ENCODE measurements at regions of chr6 and their contacts with region 1.

Region 1: DNA sequence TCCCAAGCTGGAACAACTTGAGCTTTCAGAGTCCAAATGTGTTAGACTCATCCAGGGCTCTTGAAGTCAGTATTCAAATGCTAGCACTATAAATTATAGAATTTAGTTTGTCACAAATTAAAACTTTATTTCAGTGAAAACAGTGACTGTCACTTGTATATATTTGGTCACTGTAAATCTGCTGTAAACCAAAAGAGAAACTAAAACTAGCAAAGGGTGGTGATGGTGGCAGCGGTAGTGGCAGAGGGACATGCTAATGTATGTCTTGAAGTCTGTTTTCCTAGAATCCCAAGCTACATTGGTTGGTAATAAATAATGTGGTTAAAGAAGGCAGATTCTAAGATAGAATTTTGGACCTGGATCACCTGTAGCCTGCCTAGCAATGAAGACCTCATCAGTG is 140.4 kb upstream of the CENPW start:
- DNase-seq: no peak
- H3K4me3 ChIP-seq: no peak overlapping the region
- H3K4me3 Mint-ChIP-seq: no peak overlapping the region
- H3K27ac Mint-ChIP-seq: no peak overlapping the region
- H3K4me1 ChIP-seq: peaks cover 7% of the 10 kb centered on the region
- H3K4me1 Mint-ChIP-seq: peaks cover 18% of the 10 kb centered on the region
- H3K27me3 ChIP-seq: no peaks in the 10 kb centered on the region
- H3K27me3 Mint-ChIP-seq: no peaks in the 10 kb centered on the region
- CTCF ChIP-seq: no peak

Region 2: DNA sequence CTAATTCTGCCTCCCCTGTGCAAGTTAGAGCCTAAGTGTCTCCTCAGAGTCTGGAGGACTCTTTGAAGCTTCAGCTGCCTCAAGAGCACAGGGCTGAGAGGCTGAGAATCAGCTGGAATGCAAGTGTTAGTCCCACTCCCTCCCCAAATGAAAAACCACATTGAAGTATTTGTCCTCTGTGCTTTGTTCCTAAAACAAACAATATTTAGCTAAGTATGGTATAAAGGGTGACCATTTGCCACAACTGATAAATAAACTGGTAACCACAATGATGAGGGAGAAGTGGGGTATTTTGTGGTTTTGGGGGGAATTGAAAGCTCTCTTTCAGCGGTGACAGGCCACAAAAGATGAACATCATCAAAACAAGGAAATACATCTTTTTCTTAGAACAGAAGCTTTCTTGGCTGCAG is 806.0 kb before region 1 on chr6:
- CTCF ChIA-PET with region 1: no interaction called
- POLR2A ChIA-PET with region 1: no interaction called
- intact Hi-C with region 1: no loop called
- DNase-seq: no peak
- H3K4me3 ChIP-seq: no peak overlapping the region
- H3K4me3 Mint-ChIP-seq: no peak overlapping the region
- H3K27ac Mint-ChIP-seq: no peak overlapping the region
- H3K4me1 ChIP-seq: no peaks in the 10 kb centered on the region
- H3K4me1 Mint-ChIP-seq: no peaks in the 10 kb centered on the region
- H3K27me3 ChIP-seq: no peaks in the 10 kb centered on the region
- H3K27me3 Mint-ChIP-seq: peaks cover 15% of the 10 kb centered on the region
- CTCF ChIP-seq: no peak

Region 3: GRCh38 chr6:126077810-126078776 is 121.4 kb before region 1 on chr6:
- CTCF ChIA-PET with region 1: no interaction called
- POLR2A ChIA-PET with region 1: no interaction called
- intact Hi-C with region 1: no loop called
- DNase-seq: no peak
- H3K4me3 ChIP-seq: no peak overlapping the region
- H3K4me3 Mint-ChIP-seq: no peak overlapping the region
- H3K27ac Mint-ChIP-seq: no peak overlapping the region
- H3K4me1 ChIP-seq: peaks cover 26% of the 10 kb centered on the region
- H3K4me1 Mint-ChIP-seq: peaks cover 6% of the 10 kb centered on the region
- H3K27me3 ChIP-seq: no peaks in the 10 kb centered on the region
- H3K27me3 Mint-ChIP-seq: no peaks in the 10 kb centered on the region
- CTCF ChIP-seq: no peak

Region 4: DNA sequence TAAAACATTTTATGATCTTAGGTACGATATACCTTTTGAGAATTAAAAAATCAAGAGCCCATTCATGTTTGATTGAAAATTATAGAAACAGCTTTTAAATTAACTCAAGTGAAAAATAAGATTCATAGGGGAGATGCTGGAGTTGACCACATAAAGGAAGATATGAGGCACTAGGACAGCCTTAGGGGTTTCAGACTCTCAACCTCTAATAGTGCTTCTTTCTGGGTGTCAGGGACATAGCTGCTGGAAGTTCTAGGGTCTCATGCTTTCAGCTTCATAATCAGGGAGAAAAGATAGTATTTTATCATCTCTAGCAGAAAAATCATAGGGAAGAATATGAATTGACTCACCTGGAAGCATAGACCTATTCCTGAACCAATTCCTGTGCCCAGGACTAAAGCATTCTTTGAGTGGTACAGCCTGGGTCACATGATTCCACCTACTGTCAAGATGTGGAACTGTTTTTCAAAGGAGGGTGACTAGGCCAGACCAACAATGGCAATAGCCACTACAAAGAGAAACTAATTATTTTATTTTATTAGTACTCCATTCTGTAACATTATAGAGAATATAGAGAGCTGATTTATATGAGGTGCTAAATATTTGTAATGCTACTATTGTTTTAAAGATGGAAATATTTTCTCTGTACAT is 112.7 kb after region 1 on chr6:
- CTCF ChIA-PET with region 1: no interaction called
- POLR2A ChIA-PET with region 1: no interaction called
- intact Hi-C with region 1: loop called (anchors 5 kb)
- DNase-seq: peak in 1 of 2 experiments; percentile 40
- H3K4me3 ChIP-seq: no peak overlapping the region
- H3K4me3 Mint-ChIP-seq: no peak overlapping the region
- H3K27ac Mint-ChIP-seq: no peak overlapping the region
- H3K4me1 ChIP-seq: no peaks in the 10 kb centered on the region
- H3K4me1 Mint-ChIP-seq: no peaks in the 10 kb centered on the region
- H3K27me3 ChIP-seq: no peaks in the 10 kb centered on the region
- H3K27me3 Mint-ChIP-seq: peaks cover 2% of the 10 kb centered on the region
- CTCF ChIP-seq: peak; percentile 32 to 48